ENCODE measurements at regions of chr13 and their contacts with region 1.

Region 1: GRCh38 chr13:49311816-49312215 is 64.1 kb downstream of the CDADC1 start:
- DNase-seq: no peak
- H3K4me3 ChIP-seq: no peak overlapping the region
- H3K27ac ChIP-seq: no peak overlapping the region
- H3K4me1 ChIP-seq: peaks cover 5 to 14% of the 10 kb centered on the region in 2 experiments; a peak in 2 of 4 replicates
- H3K27me3 ChIP-seq: no peaks in the 10 kb centered on the region
- CTCF ChIP-seq: no peak
- EP300 ChIP-seq: no peak
- RAD21 ChIP-seq: no peak

Region 2: DNA sequence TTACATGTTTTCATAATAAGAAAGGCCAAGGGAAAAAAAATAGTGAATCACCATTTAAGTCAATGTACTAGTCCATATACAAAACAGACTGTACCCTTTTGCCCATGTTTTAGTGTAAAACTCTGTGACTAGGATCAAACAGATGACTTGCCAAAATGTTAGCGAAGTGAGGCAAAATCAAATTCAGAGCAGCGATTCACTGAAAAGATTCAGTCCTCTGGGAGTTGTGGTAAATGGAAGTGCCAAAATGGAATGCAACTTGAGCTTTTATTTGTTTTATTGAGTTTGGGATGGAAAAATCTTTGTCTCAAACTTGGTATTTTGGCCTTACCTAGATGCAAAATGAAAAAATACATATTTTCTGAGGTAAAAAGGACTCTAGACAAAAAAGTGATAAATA is 55.0 kb before region 1 on chr13:
- CTCF ChIA-PET with region 1: no interaction called
- POLR2A ChIA-PET with region 1: no interaction called
- DNase-seq: no peak
- H3K4me3 ChIP-seq: no peak overlapping the region
- H3K27ac ChIP-seq: no peak overlapping the region
- H3K4me1 ChIP-seq: no peaks in the 10 kb centered on the region
- H3K27me3 ChIP-seq: no peaks in the 10 kb centered on the region
- CTCF ChIP-seq: no peak
- EP300 ChIP-seq: no peak
- RAD21 ChIP-seq: no peak

Region 3: GRCh38 chr13:49300739-49301589 is 10.9 kb before region 1 on chr13:
- CTCF ChIA-PET with region 1: interaction called, 13 read pairs
- POLR2A ChIA-PET with region 1: no interaction called
- DNase-seq: peak; percentile 76
- H3K4me3 ChIP-seq: no peak overlapping the region; a peak in 1 of 4 replicates
- H3K27ac ChIP-seq: no peak overlapping the region
- H3K4me1 ChIP-seq: no peaks in the 10 kb centered on the region; a peak in 1 of 4 replicates
- H3K27me3 ChIP-seq: no peaks in the 10 kb centered on the region
- CTCF ChIP-seq: peak; percentile 93
- EP300 ChIP-seq: no peak
- RAD21 ChIP-seq: peak; percentile 97

Measured in SK-N-SH (cell line).